ENCODE measurements at regions of chr19 and their contacts with region 1.

Region 1: DNA sequence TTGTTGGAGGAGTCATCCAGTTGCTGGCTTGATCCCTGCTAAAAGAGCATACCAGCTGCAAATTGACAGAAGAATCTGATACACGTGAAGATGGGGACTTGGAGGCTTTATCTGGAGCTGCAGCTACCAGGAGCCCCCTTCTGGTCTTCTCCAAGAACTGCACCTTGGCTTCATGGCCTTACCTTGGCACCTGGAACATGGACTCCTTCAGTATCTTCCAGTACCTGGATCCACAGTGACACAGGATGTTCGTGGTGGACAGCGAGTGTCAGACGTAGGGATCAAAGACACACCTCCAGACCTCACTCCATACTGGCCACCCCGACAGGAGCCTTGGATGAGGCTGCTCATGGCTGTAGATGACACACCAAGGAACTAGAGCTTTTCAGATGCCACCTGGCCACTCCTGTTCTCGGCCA is 9.9 kb upstream of the ACSBG2 start:
- DNase-seq: peak; percentile 49 to 88 (median 57)
- ATAC-seq: peak; percentile 94
- H3K4me3 ChIP-seq: no peak overlapping the region
- H3K4me3 Mint-ChIP-seq: no peak overlapping the region
- H3K27ac ChIP-seq: no peak overlapping the region
- H3K27ac Mint-ChIP-seq: no peak overlapping the region
- H3K4me1 ChIP-seq: peaks cover 3% of the 10 kb centered on the region
- H3K4me1 Mint-ChIP-seq: peaks cover 4% of the 10 kb centered on the region
- H3K27me3 ChIP-seq: no peaks in the 10 kb centered on the region
- H3K27me3 Mint-ChIP-seq: no peaks in the 10 kb centered on the region
- CTCF ChIP-seq: peak; percentile 85

Region 2: GRCh38 chr19:5987077-5987818 is 138.3 kb before region 1 on chr19:
- CTCF ChIA-PET with region 1: no interaction called
- POLR2A ChIA-PET with region 1: no interaction called
- intact Hi-C with region 1: loop called in 1 of 2 experiments (anchors 5 kb)
- DNase-seq: peak; percentile 55 to 88 (median 68)
- ATAC-seq: peak; percentile 58
- H3K4me3 ChIP-seq: peak overlapping the region; percentile 48
- H3K4me3 Mint-ChIP-seq: peak overlapping the region; percentile 64
- H3K27ac ChIP-seq: no peak overlapping the region
- H3K27ac Mint-ChIP-seq: no peak overlapping the region
- H3K4me1 ChIP-seq: peaks cover 22% of the 10 kb centered on the region
- H3K4me1 Mint-ChIP-seq: peaks cover 20% of the 10 kb centered on the region
- H3K27me3 ChIP-seq: no peaks in the 10 kb centered on the region
- H3K27me3 Mint-ChIP-seq: no peaks in the 10 kb centered on the region
- CTCF ChIP-seq: peak; percentile 97

Region 3: DNA sequence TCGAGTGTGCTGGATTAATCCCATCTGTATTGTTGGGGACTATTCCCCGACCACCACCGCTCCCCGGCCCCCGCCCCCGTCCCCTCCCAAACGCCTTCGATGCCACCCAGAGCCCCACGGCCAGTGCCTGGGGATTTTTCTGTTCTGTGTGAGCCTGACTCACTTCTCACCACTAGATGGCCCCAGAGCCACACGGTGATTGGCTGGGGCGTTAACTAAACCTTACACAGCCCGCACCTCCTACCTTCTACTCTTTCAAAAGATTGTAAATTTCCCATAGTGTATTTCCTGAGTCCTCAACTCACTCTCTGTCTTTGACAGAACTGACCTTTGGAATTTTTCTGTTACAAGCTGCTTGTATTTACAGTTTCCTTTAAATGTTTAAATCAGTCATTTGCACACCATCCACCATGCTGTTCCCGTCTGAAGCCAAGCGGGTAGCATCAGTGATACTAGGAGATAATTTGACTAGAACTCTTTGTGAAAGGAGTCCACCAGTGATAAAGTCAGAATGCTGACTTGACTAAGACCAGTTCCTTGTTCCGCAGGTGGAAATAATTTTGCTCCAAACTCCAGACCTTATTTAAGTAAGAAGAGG is 76.7 kb before region 1 on chr19:
- CTCF ChIA-PET with region 1: interaction called, 97 read pairs
- POLR2A ChIA-PET with region 1: no interaction called
- intact Hi-C with region 1: loop called (anchors 1 kb)
- DNase-seq: peak; percentile 65 to 90 (median 74)
- ATAC-seq: peak; percentile 99
- H3K4me3 ChIP-seq: no peak overlapping the region
- H3K4me3 Mint-ChIP-seq: no peak overlapping the region
- H3K27ac ChIP-seq: no peak overlapping the region
- H3K27ac Mint-ChIP-seq: no peak overlapping the region
- H3K4me1 ChIP-seq: peaks cover 3% of the 10 kb centered on the region
- H3K4me1 Mint-ChIP-seq: peaks cover 6% of the 10 kb centered on the region
- H3K27me3 ChIP-seq: no peaks in the 10 kb centered on the region
- H3K27me3 Mint-ChIP-seq: peaks cover 7% of the 10 kb centered on the region
- CTCF ChIP-seq: peak; percentile 91

Region 4: DNA sequence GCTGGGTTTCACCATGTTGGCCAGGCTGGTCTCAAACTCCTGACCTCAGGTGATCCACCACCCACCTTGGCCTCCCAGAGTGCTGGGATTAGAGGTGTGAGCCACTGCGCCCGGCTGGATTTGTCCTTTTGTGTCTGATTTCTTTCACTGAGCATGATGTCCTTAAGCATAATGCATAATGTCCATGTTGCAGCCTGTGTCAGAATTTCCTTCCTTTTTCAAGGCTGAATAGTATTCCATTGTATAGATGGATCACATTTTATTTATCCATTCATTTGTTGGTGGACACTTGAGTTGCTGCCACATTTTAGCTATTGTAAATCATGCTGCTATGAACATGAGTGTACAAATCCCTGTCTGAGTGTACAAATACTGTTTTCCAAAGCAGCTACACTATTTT is 40.8 kb before region 1 on chr19:
- CTCF ChIA-PET with region 1: interaction called, 5 read pairs
- POLR2A ChIA-PET with region 1: no interaction called
- intact Hi-C with region 1: loop called in 1 of 2 experiments (anchors 5 kb)
- DNase-seq: no peak
- ATAC-seq: no peak
- H3K4me3 ChIP-seq: no peak overlapping the region
- H3K4me3 Mint-ChIP-seq: no peak overlapping the region
- H3K27ac ChIP-seq: no peak overlapping the region
- H3K27ac Mint-ChIP-seq: no peak overlapping the region
- H3K4me1 ChIP-seq: peaks cover 25% of the 10 kb centered on the region
- H3K4me1 Mint-ChIP-seq: peaks cover 19% of the 10 kb centered on the region
- H3K27me3 ChIP-seq: no peaks in the 10 kb centered on the region
- H3K27me3 Mint-ChIP-seq: peaks cover 2% of the 10 kb centered on the region
- CTCF ChIP-seq: no peak

Measured in CD4-positive, alpha-beta T cell (primary cell).